SK-N-SH (cell line): ENCODE measurements at regions of chr19 and their contacts with region 1.

Region 1: GRCh38 chr19:3665681-3666544 is 34.4 kb downstream of the PIP5K1C start:
- DNase-seq: peak; percentile 96
- H3K4me3 ChIP-seq: peak overlapping the region in 1 of 2 experiments; percentile 48; a peak in 1 of 4 replicates
- H3K27ac ChIP-seq: no peak overlapping the region
- H3K4me1 ChIP-seq: peaks cover 0 to 2% of the 10 kb centered on the region in 2 experiments; a peak in 1 of 4 replicates
- H3K27me3 ChIP-seq: no peaks in the 10 kb centered on the region
- CTCF ChIP-seq: peak; percentile 85
- EP300 ChIP-seq: no peak
- RAD21 ChIP-seq: peak; percentile 80

Region 2: GRCh38 chr19:3692141-3693024 is 26.5 kb after region 1 on chr19:
- CTCF ChIA-PET with region 1: interaction called, 20 read pairs
- POLR2A ChIA-PET with region 1: no interaction called
- DNase-seq: peak; percentile 82
- H3K4me3 ChIP-seq: no peak overlapping the region
- H3K27ac ChIP-seq: no peak overlapping the region
- H3K4me1 ChIP-seq: no peaks in the 10 kb centered on the region
- H3K27me3 ChIP-seq: no peaks in the 10 kb centered on the region
- CTCF ChIP-seq: peak; percentile 57
- EP300 ChIP-seq: no peak
- RAD21 ChIP-seq: no peak; the same call in 1 of the 2 replicates

Region 3: DNA sequence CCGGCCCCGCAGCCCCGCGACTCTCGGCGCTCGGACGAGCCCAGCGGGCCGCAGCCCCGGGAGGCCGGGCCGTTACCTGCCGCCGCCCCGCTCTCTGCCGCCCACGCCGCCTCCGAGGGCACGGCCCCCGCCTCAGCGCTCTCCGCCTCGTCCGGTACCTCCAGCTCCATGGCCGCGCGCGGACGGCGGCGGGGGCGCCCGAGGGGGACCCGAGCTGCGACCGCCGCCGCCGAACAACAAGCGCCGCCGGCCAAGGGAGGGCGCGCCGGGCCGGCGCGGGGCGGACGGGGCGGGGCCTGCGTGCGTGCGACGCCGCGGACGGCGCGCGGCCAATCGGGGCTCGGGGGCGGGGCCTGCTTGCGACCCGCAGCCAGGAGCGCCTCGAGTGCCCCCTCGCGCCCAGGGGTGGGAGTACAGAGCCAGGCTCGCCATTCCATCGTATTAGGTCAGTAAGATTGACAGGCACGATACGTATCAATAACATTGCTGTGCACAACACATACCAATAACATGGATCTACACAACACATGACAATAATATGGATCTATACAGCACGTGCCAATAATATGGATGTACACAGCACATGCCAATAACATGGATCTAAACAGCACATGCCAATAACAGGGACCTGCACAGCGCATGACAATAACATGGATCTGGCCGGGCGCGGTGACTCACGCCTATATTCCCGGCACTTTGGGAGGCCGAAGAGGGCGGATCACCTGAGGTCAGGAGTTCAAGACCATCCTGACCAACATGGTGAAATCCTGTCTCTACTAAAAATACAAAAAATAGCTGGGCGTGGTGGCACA is 34.5 kb after region 1 on chr19 and contains the start of gene PIP5K1C:
- CTCF ChIA-PET with region 1: interaction called, 39 read pairs
- POLR2A ChIA-PET with region 1: no interaction called
- DNase-seq: peak; percentile 98
- H3K4me3 ChIP-seq: peak within 1 kb of the TSS; percentile 83 to 88
- H3K27ac ChIP-seq: peak within 1 kb of the TSS; percentile 24 to 64; a peak in 3 of 4 replicates
- H3K4me1 ChIP-seq: peaks cover 0 to 14% of the 10 kb centered on the region in 2 experiments; a peak in 1 of 4 replicates
- H3K27me3 ChIP-seq: peaks cover 2% of the 10 kb centered on the region; the same call in 1 of the 2 replicates
- CTCF ChIP-seq: peak; percentile 65
- EP300 ChIP-seq: no peak
- RAD21 ChIP-seq: peak; percentile 64
- polyA plus RNA-seq, gene PIP5K1C: 6.9 and 12.3 TPM in 2 replicates

Region 4: GRCh38 chr19:3710265-3710812 is 44.4 kb after region 1 on chr19:
- CTCF ChIA-PET with region 1: interaction called, 27 read pairs
- POLR2A ChIA-PET with region 1: no interaction called
- DNase-seq: peak; percentile 20
- H3K4me3 ChIP-seq: no peak overlapping the region
- H3K27ac ChIP-seq: no peak overlapping the region
- H3K4me1 ChIP-seq: no peaks in the 10 kb centered on the region; a peak in 1 of 4 replicates
- H3K27me3 ChIP-seq: peaks cover 27% of the 10 kb centered on the region
- CTCF ChIP-seq: no peak
- EP300 ChIP-seq: no peak
- RAD21 ChIP-seq: no peak

Region 5: GRCh38 chr19:3721131-3721886 is 55.4 kb after region 1 on chr19:
- CTCF ChIA-PET with region 1: interaction called, 21 read pairs
- POLR2A ChIA-PET with region 1: interaction called, 4 read pairs
- DNase-seq: peak; percentile 98
- H3K4me3 ChIP-seq: peak overlapping the region in 1 of 2 experiments; percentile 40; a peak in 2 of 4 replicates
- H3K27ac ChIP-seq: no peak overlapping the region
- H3K4me1 ChIP-seq: peaks cover 0 to 2% of the 10 kb centered on the region in 2 experiments; a peak in 1 of 4 replicates
- H3K27me3 ChIP-seq: peaks cover 13% of the 10 kb centered on the region
- CTCF ChIP-seq: no peak
- EP300 ChIP-seq: peak in 1 of 2 experiments; percentile 41; a peak in 1 of 4 replicates
- RAD21 ChIP-seq: no peak